GM23248 (cell line): ENCODE measurements at regions of chr3 and their contacts with region 1.

Region 1: DNA sequence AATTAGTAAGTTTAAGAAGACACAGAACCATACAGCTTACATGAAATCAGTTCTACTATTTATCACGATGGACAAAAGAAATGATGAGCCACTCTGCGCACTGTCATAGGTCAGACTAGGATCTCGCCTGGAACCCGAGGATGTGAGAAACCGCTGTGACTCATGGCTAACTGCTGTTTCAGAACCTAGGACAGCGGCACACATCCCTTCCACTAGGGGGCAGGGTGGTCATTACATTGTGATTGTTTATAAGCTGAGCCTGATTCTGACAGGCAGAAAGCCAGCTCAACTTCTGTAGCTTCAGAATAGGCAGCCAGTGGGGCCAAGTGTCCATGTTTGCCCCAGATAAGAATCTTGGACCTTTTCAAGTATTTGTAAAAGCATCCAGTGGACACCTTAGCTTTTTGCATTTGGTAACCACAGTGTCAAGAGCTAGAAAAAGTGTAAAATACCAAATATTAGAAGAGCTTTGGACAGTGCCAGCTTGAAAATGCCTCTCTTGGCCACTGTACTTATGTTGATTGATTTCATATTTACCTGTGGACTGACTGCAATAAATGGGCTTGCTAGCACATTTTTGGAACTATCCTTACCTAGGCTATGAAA is 115.8 kb downstream of the KBTBD8 start:
- DNase-seq: peak; percentile 90
- H3K4me3 ChIP-seq: no peak overlapping the region
- H3K27ac ChIP-seq: no peak overlapping the region
- H3K4me1 ChIP-seq: no peaks in the 10 kb centered on the region
- H3K27me3 ChIP-seq: no peaks in the 10 kb centered on the region

Region 2: GRCh38 chr3:67790043-67790442 is 676.1 kb after region 1 on chr3:
- in situ Hi-C with region 1: loop called (anchors 25 kb)
- DNase-seq: peak; percentile 63
- H3K4me3 ChIP-seq: no peak overlapping the region
- H3K27ac ChIP-seq: no peak overlapping the region
- H3K4me1 ChIP-seq: no peaks in the 10 kb centered on the region
- H3K27me3 ChIP-seq: no peaks in the 10 kb centered on the region